Right cardiac atrium (tissue), 5 donors: ENCODE measurements at regions of chr5 and their contacts with region 1.

Region 1: GRCh38 chr5:119943148-119943547 is 313.8 kb downstream of the FAM170A start:
- DNase-seq: no peak
- ATAC-seq: peak in 1 of 2 donors; percentile 55
- H3K4me3 ChIP-seq: no peak overlapping the region
- H3K27ac ChIP-seq: no peak overlapping the region
- H3K4me1 ChIP-seq: no peaks in the 10 kb centered on the region
- H3K27me3 ChIP-seq: no peaks in the 10 kb centered on the region

Region 2: DNA sequence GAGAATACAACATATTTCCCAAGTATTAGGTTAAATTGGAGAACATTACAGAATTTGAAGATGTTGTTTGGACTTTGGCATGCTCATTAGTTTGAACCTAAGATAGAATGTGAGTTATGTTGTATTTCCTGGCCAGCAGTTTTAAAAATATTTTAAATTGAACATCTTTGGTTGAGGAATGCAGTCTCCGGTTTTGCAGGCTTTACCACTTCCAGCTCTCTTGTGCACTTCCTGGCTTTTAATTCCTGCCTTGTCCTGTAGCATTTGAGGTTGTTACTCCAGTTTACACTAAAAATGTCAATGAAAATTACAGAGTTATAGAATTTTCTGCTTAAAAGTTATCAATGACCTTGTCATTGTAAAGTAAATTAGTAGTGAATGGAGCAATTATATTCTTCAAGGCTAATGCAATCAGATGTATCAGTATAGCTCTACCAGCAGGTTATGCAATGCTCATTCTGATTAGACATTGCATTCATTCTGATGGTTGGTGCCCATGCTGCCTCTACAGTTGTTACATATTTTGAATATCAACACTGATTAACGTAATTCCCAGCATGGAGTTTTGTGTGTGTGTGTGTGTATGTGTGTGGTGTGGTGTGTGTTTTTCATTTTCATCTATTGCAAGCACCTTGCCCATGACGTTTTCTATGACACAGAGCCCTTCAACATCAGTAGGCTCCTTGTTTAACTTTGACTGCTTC is 31.7 kb after region 1 on chr5:
- intact Hi-C with region 1: no loop called
- DNase-seq: no peak
- ATAC-seq: no peak
- H3K4me3 ChIP-seq: no peak overlapping the region
- H3K27ac ChIP-seq: no peak overlapping the region
- H3K4me1 ChIP-seq: no peaks in the 10 kb centered on the region
- H3K27me3 ChIP-seq: no peaks in the 10 kb centered on the region

Region 3: GRCh38 chr5:120463991-120464626 is 521.0 kb after region 1 on chr5 and contains the start of gene PRR16:
- intact Hi-C with region 1: loop called in 2 of 4 experiments (anchors 5 to 10 kb)
- DNase-seq: peak; percentile 47 to 84 (median 82)
- ATAC-seq: peak; percentile 92 to 95
- H3K4me3 ChIP-seq: peak within 1 kb of the TSS; percentile 90
- H3K27ac ChIP-seq: peak within 1 kb of the TSS; percentile 34
- H3K4me1 ChIP-seq: no peaks in the 10 kb centered on the region
- H3K27me3 ChIP-seq: no peaks in the 10 kb centered on the region
- total RNA-seq, gene PRR16: 6.9 to 13.3 (median 8.9) TPM

Region 4: GRCh38 chr5:120803282-120803681 is 860.1 kb after region 1 on chr5:
- intact Hi-C with region 1: loop called in 2 of 4 experiments (anchors 5 to 10 kb)
- DNase-seq: no peak
- ATAC-seq: no peak
- H3K4me3 ChIP-seq: no peak overlapping the region
- H3K27ac ChIP-seq: no peak overlapping the region
- H3K4me1 ChIP-seq: no peaks in the 10 kb centered on the region
- H3K27me3 ChIP-seq: no peaks in the 10 kb centered on the region